Right ventricle myocardium inferior (tissue), 1 donor: ENCODE measurements at regions of chr11 and their contacts with region 1.

Region 1: DNA sequence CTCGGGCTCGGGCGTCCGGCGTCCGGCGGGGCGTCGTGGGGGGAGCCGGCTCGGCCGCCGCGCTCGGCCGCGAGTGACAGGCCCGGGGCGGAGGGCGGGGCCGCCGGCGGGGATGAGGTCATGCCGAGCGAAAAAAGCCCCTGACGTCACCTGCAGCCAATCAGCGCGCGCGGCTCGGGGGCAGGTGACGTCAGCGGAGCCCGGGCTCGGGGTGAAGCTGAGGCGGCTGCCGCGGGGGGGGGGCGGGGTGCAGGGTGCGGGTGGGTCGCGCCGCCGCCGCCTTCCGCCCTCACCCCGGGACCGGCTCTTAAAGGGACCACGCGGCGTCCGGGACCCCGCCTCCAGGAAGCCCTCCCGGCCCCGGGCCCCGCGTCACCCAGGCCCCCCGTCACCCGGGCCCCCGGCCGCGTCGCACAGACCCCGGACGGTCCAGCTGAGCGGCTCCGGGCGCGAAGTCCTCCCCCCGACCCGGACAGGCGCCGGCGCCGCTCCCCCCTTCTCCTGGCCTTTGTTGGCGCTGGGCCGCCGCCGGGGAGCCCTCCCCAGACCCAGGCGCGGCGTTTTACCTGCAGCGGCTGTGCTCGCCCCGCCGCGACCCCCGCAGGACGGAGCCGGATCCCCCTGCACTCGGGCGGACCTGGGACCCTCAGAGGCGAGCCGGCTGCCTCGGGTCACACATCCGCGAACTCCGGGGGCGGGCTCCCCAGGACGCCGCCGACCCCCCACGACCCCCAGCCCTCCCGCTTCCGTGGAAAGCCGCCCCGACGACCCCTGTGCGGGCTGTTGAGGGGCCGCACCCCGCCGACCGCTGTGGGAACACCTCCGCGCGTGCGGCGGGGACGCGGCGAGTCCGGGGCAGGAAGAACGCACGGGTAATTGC is at the start of gene DUSP8:
- DNase-seq: peak; percentile 95
- ATAC-seq: peak; percentile 83
- total RNA-seq, gene DUSP8: 10.5 TPM

Region 2: DNA sequence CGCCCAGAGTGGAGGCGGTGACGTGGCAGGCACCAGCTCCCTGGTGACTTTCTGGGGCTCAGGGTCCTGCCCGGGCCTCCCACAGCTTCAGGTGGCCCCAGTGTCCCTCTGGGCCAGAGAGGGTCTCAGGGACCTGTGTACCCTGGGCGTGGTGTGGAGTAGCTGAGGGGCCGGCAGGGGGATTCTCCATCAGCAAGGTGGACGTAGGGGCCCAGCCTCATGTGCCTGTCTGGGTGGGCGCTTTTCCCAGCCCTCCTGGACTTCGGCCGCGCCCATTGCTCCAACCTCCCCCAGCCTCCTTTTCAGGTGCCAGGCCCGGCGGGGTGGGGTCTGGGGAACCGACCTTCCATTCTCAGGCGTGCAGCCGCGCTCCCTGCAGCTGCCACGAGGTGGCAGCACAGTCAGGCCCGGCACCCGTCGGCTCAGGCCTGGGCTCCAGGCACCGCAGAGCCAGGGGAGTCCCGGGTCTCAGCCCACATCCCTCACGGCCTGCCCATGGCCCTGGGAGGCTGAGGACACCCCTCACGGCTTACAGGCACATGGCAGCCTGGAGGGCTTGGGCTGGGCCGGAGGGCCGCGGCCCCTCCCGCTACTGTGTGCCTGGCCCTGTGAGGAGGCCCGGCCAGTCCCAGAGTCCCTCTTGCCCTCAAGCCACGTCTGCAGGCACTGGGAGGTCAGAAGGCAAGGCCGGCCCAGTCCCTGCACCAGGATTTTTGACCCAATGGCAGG is 369.5 kb before region 1 on chr11:
- intact Hi-C with region 1: loop called (anchors 5 kb)
- DNase-seq: peak; percentile 81
- ATAC-seq: peak; percentile 71

Region 3: GRCh38 chr11:1309498-1310317 is 262.7 kb before region 1 on chr11 and contains the start of gene TOLLIP:
- intact Hi-C with region 1: loop called (anchors 5 kb)
- DNase-seq: peak; percentile 98
- ATAC-seq: peak; percentile 97
- total RNA-seq, gene TOLLIP: 46.8 TPM

Region 4: DNA sequence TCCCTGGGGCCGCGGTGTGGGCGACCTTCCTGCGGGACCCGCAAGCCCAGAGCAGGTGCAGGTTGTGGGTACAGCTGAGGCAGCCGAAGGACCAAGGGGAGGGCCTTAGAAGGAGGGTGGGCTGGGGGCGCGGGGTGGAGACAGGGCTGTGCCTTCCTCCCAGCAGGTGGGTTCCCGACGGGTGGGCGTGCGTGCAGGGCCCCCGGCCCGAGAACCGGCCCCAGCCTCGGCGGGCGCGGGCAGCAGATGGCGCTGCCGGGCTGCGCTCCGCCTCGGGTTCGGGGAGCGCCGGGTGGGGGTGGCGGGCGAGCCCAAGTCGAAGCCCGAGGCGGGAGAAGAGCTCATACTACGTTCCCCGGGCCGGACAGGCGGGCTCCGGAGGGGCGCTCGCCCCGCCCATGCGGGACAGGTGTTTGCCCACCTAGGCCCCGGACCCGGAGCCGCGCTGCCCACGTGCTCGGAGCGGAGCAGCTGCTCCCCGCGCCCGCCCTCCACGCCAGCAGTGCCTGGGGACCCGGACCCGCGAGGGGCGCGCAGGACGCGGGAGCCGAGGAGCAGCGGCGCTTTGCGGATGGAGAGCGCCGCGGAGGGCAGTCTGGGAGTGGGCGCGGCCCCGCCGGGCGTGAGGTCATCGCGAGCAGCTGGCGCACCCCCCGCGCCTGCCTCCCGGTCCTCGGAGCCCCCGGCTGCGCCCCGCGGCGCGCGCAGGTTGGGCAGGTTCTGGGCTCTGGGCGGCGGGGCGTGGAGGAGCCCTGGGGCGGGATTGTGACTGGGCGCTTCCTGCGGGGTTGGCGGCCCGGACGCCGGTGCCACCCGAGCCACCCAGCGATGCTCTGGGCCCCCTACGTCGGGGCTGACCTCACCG is 25.7 kb before region 1 on chr11:
- intact Hi-C with region 1: loop called (anchors 1 kb)
- DNase-seq: peak; percentile 64
- ATAC-seq: peak; percentile 70

Region 5: DNA sequence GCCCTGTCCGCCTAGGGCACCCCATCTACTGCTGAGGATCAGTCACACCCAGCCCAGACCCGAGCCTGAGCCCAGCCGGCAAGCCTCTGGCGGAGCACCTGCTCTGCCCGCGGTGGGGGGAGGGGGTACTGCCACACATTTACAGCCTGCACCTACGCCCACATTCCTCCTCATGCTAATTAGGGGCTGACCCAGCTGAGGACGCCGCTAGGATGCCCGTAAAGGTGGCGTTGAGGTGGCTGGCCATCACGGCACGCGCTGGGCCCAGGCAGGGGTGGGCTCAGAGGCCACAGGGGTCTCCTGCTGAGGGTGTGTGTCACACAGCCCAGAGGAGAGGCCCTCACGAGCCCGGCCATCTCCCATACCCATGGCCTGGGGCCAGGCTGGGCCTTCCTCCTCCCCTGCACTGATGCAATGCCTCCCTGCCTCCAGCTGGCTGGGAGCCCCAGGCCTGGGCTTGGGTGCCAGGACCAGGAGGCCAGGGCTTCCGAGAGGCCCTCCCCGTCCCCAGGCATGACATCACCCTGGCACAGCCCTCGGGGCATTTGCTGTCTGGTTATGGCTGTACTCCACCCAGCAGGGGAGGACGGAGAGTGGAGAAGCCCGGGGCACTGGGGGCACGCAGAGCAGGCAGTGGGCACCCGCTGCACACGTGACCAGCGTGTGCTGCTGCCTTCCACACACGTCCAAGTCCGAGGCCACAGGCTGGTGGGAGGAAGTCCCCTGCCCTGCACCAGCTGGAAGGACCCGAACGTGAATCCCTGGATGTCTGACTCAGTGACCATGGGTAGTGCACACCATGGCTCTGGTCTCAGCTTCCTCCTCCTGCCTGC is 13.1 kb before region 1 on chr11:
- intact Hi-C with region 1: loop called (anchors 2 kb)
- DNase-seq: peak; percentile 93
- ATAC-seq: peak; percentile 86

Region 6: DNA sequence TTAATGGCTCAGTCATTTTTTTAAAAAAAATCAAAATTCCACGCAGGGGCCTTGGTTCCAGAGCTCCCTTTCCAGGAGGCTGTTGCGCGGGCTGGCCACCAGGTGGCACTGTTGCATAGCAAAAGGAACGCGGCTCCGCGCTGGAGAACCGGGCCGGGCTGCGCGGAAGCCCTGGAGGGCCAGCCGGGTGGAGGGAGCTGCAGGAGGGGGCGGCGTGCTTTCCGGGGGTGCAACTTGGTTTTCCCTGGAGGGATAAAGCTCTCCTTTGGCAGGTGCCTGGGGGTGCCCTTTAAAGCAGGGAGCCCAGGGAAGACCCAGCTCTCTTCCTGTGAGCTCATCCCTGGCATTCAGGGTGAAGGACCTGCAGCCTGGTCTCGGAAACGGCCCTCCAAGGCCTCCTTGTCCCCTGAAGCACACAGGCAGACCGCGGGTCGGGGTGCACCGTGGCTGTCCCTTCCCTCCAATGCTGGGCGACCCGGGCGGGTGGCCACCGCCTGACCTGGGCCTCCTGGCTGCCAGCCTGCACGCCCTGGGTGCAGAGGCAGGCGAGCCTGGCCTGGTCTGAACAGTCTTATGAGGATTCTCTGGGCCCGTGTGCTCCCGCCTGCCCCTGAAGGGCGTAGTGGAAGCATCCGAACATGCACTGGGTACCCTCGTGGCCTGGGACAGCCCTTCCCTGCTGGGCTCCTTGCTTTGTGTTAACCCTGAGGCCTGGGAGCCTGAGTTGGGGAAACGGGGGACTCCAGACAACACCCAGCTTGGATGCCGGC is 80.5 kb after region 1 on chr11:
- intact Hi-C with region 1: no loop called
- DNase-seq: peak; percentile 94
- ATAC-seq: peak; percentile 75